Heart right ventricle (tissue), 16 donors: ENCODE measurements at regions of chr9 and their contacts with region 1.

Region 1: DNA sequence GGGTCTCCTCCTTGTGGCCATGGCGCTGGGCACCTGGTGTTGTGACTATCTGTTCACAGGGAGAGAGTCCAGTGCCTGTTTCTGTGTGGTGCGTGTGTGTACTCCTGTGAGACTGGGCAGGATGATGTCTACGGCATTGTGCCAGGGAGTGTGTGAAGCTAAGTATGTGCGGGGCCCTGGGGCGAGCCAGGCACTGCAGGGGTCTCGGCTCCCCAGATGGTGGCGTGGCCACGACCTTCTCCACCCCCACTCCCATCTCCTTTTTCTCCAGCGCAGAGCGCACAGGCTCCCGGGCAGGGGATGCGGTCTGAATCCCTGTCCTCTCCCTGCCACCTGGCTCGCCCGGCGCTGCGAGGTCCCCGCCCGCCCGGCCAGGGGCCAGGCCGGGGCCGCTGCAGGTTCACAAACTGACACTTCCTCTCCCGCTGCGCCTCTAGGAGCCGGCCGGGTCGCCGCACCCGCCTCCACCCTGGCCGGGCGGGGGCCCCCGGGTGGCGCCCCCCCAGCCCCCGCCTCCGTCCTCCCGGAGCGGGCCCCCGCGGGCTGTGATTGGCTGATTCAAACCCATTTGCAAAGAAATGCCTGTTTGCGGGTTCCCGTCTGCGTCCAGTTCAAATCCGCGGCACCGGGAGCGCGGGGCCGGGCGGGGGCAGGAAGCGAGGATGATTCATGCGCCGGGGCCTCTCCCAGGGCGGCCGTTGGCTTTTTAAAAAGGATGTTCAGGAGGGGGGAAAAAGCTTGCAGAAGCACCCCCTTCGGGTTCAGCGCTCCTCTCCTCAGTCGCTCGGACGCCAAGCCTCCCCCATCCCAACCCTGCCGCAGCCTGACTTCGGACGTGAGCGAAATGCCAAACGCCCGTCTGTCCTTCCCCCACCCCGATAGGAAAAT is 790 bp downstream of the PHF19 start:
- DNase-seq: peak; percentile 82
- ATAC-seq: peak; percentile 70 to 83 (median 81)
- H3K4me3 ChIP-seq: peak overlapping the region; percentile 49 to 86 (median 74)
- H3K27ac ChIP-seq: peak overlapping the region; percentile 76 to 96 (median 92)
- H3K4me1 ChIP-seq: peaks cover 0 to 21% (median 9%) of the 10 kb centered on the region in 9 donors
- H3K27me3 ChIP-seq: no peaks in the 10 kb centered on the region
- CTCF ChIP-seq: peak in 2 of 9 donors; percentile 7 to 21

Region 2: GRCh38 chr9:120902569-120903535 is 26.7 kb after region 1 on chr9:
- intact Hi-C with region 1: loop called in 1 of 10 experiments (anchors 1 kb)
- DNase-seq: no peak
- ATAC-seq: no peak
- H3K4me3 ChIP-seq: no peak overlapping the region
- H3K27ac ChIP-seq: peak overlapping the region in 1 of 10 donors; percentile 65
- H3K4me1 ChIP-seq: no peaks in the 10 kb centered on the region
- H3K27me3 ChIP-seq: no peaks in the 10 kb centered on the region
- CTCF ChIP-seq: no peak

Region 3: GRCh38 chr9:120928483-120929228 is 52.5 kb after region 1 on chr9:
- intact Hi-C with region 1: loop called in 3 of 10 experiments (anchors 2 to 10 kb)
- DNase-seq: peak; percentile 73 to 84
- ATAC-seq: peak; percentile 87 to 96 (median 90)
- H3K4me3 ChIP-seq: peak overlapping the region; percentile 52 to 76 (median 72)
- H3K27ac ChIP-seq: peak overlapping the region; percentile 76 to 95 (median 92)
- H3K4me1 ChIP-seq: peaks cover 5 to 83% (median 35%) of the 10 kb centered on the region in 9 donors
- H3K27me3 ChIP-seq: no peaks in the 10 kb centered on the region
- CTCF ChIP-seq: peak in 7 of 9 donors; percentile 14 to 46 (median 32)

Region 4: DNA sequence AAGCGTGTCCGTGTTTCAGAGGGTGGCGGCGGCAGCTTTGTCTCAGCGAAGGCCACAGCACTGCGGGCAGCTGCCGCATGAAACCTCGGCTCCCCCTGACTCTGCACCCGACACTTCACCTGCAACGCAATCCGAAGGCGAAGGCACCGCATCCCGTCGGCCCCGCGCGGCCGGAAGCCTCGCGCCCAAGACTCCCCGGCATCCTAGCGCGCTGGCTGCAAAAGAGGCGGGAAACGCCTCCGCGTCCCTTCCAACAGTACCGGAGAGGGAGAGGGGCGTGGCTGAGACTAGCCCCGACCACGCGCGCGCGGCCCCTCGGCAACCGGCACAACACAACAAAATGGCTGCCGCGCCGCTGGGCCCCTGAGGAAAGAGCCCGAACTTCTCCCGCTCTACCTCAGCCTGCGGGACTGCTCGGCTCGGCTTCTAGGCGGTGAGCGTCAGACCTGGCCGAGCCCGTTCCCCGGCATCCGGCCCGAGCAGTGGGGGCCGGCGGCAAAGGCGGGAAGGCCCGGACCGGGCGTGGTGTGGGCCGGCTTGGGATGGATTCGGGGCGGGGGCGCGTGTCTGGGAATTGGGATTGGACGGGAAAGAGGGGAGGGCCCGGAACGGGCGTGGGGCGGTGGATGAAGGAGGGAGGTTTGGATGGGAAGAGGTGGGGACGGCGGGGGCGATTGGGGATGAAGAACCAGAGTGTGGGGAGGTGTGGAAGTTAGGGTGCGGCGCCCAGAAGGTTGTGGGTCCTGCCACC is 198.6 kb after region 1 on chr9 and contains the start of gene CNTRL:
- intact Hi-C with region 1: loop called in 1 of 10 experiments (anchors 10 kb)
- DNase-seq: peak; percentile 87 to 92
- ATAC-seq: peak; percentile 93 to 96 (median 96)
- H3K4me3 ChIP-seq: peak within 1 kb of the TSS; percentile 40 to 93 (median 78)
- H3K27ac ChIP-seq: peak within 1 kb of the TSS; percentile 71 to 94 (median 88)
- H3K4me1 ChIP-seq: peaks cover 0 to 45% (median 19%) of the 10 kb centered on the region in 9 donors
- H3K27me3 ChIP-seq: no peaks in the 10 kb centered on the region
- CTCF ChIP-seq: peak in 1 of 9 donors; percentile 2
- total RNA-seq, gene CNTRL: 3.6 to 7.5 (median 4.2) TPM